Activated B cell treated with CpG ODN at 0.5 μM for 24 hours (primary cell): ENCODE measurements at regions of chr17 and their contacts with region 1.

Region 1: GRCh38 chr17:3865176-3865575 is 19.1 kb upstream of the NCBP3 start:
- DNase-seq: no peak
- ATAC-seq: no peak
- H3K4me3 Mint-ChIP-seq: no peak overlapping the region
- H3K27ac Mint-ChIP-seq: no peak overlapping the region
- H3K4me1 Mint-ChIP-seq: no peaks in the 10 kb centered on the region
- H3K27me3 Mint-ChIP-seq: no peaks in the 10 kb centered on the region
- CTCF ChIP-seq: no peak

Region 2: GRCh38 chr17:4004517-4005295 is 139.5 kb after region 1 on chr17:
- CTCF ChIA-PET with region 1: interaction called, 8 read pairs
- POLR2A ChIA-PET with region 1: interaction called, 3 read pairs
- intact Hi-C with region 1: loop called (anchors 1 kb)
- DNase-seq: peak; percentile 77
- ATAC-seq: peak; percentile 80
- H3K4me3 Mint-ChIP-seq: peak overlapping the region; percentile 38
- H3K27ac Mint-ChIP-seq: no peak overlapping the region
- H3K4me1 Mint-ChIP-seq: peaks cover 24% of the 10 kb centered on the region
- H3K27me3 Mint-ChIP-seq: no peaks in the 10 kb centered on the region
- CTCF ChIP-seq: peak; percentile 96

Region 3: GRCh38 chr17:4074831-4075495 is 209.8 kb after region 1 on chr17:
- CTCF ChIA-PET with region 1: interaction called, 8 read pairs
- POLR2A ChIA-PET with region 1: no interaction called
- intact Hi-C with region 1: loop called (anchors 1 kb)
- DNase-seq: no peak
- ATAC-seq: peak; percentile 53
- H3K4me3 Mint-ChIP-seq: peak overlapping the region; percentile 76
- H3K27ac Mint-ChIP-seq: peak overlapping the region; percentile 84
- H3K4me1 Mint-ChIP-seq: peaks cover 18% of the 10 kb centered on the region
- H3K27me3 Mint-ChIP-seq: no peaks in the 10 kb centered on the region
- CTCF ChIP-seq: no peak